Breast epithelium (tissue), 4 donors: ENCODE measurements at regions of chr10 and their contacts with region 1.

Region 1: GRCh38 chr10:107701943-107702342 is 537.4 kb upstream of the SORCS1 start:
- DNase-seq: no peak
- H3K4me3 ChIP-seq: no peak overlapping the region
- H3K27ac ChIP-seq: no peak overlapping the region
- H3K4me1 ChIP-seq: no peaks in the 10 kb centered on the region
- H3K27me3 ChIP-seq: no peaks in the 10 kb centered on the region
- CTCF ChIP-seq: no peak
- POLR2A ChIP-seq: no peak

Region 2: GRCh38 chr10:106741031-106741530 is 960.9 kb before region 1 on chr10:
- intact Hi-C with region 1: loop called (anchors 5 kb)
- DNase-seq: no peak
- H3K4me3 ChIP-seq: no peak overlapping the region
- H3K27ac ChIP-seq: no peak overlapping the region
- H3K4me1 ChIP-seq: no peaks in the 10 kb centered on the region
- H3K27me3 ChIP-seq: no peaks in the 10 kb centered on the region
- CTCF ChIP-seq: no peak
- POLR2A ChIP-seq: no peak